ENCODE measurements at regions of chr5 and their contacts with region 1.

Region 1: GRCh38 chr5:112995764-112996618 is 19.4 kb downstream of the DCP2 start:
- DNase-seq: peak in 1 of 2 experiments; percentile 88
- H3K4me3 ChIP-seq: no peak overlapping the region
- H3K27ac ChIP-seq: no peak overlapping the region
- H3K4me1 ChIP-seq: no peaks in the 10 kb centered on the region; a peak in 1 of 7 replicates
- H3K27me3 ChIP-seq: no peaks in the 10 kb centered on the region
- CTCF ChIP-seq: peak; percentile 38 to 82 (median 72)
- EP300 ChIP-seq: no peak
- POLR2A ChIP-seq: no peak
- RAD21 ChIP-seq: peak; percentile 86 to 88

Region 2: DNA sequence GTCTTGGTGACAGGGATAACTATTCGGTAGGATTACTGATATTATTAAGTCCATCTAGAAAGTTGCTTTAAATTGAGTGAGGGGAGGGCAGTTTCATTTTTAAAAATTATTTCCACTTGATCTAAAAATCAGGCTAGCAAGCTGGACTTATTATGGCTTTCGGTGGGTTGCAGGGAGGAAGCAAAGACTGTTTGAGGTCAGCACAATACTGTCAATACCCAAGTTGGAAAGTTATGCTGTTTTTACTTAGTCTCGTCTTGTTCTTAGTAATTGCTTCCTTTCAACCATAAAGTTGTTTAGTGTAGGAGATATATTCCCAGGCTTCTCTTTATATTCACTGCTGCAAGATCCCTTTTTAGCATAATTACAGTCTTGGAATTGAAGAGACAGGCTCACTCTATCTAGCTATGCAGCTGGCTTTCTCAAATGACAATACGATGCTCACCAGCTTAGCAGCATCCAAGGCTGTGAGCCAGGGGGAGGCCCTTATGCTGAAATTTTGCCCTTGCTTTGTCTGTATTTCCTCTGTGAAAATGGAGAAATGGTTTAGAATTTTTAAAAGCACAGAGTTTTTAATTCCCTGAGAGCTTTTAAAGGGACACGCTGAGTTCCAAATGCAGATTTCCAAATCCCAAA is 326.5 kb before region 1 on chr5:
- CTCF ChIA-PET with region 1: no interaction called
- POLR2A ChIA-PET with region 1: no interaction called
- DNase-seq: no peak
- H3K4me3 ChIP-seq: no peak overlapping the region
- H3K27ac ChIP-seq: no peak overlapping the region
- H3K4me1 ChIP-seq: no peaks in the 10 kb centered on the region
- H3K27me3 ChIP-seq: no peaks in the 10 kb centered on the region
- CTCF ChIP-seq: no peak
- EP300 ChIP-seq: no peak
- POLR2A ChIP-seq: no peak
- RAD21 ChIP-seq: no peak

Region 3: DNA sequence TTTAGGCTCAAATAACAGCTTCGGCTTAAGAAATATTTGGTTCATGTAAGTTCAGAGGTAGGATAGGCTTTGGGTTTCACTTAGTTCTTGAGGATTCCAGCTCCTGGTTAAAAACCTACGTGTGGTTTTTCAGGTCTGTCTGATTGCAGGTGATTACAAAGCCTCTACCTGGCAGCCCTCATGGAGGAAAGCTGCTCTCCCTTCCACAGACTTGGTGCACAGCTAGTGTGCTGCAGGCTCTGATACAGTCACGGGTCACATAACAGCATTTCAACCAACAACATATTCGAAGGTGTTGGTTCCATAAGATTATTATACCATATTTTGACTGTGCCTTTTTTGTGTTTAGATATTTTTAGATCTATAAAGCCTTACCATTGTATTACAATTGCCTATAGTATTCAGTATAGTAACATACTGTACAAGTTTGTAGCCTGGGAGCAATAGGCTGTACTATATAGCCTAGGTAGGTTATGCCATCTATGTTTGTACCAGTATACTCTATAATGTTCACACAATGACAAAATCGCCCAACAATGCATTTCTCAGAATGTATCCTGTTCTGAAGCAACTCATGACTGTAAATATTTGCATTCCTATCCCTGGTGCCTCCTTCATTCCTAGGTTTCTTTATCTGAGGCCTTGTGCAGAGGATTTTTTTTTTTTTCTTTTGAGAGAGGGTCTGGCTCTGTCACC is 27.4 kb before region 1 on chr5:
- CTCF ChIA-PET with region 1: interaction called, 18 read pairs
- POLR2A ChIA-PET with region 1: no interaction called
- DNase-seq: no peak
- H3K4me3 ChIP-seq: no peak overlapping the region
- H3K27ac ChIP-seq: no peak overlapping the region
- H3K4me1 ChIP-seq: peaks cover 0 to 6% (median 3%) of the 10 kb centered on the region in 4 experiments; a peak in 4 of 7 replicates
- H3K27me3 ChIP-seq: no peaks in the 10 kb centered on the region
- CTCF ChIP-seq: no peak
- EP300 ChIP-seq: no peak
- POLR2A ChIP-seq: no peak
- RAD21 ChIP-seq: no peak

Region 4: DNA sequence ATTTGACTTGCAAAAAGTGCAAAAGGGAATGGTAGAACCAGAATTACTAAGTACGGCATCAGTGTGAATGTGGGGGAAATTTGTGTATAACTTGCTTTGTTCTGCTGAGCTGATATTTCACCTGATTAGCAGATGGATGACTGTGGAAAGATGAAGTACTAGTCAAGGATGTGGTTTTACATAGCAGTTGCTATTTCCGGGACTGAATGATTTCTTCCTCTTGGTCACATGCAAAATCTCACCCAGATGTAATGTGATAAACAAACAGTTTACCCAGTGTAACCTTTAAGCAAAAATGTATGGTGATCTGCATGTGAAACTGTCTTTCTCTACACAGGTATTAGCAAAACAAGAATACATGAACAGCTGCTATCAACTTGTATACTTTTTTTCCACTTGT is 26.7 kb after region 1 on chr5:
- CTCF ChIA-PET with region 1: interaction called, 16 read pairs
- POLR2A ChIA-PET with region 1: no interaction called
- DNase-seq: no peak
- H3K4me3 ChIP-seq: no peak overlapping the region
- H3K27ac ChIP-seq: no peak overlapping the region
- H3K4me1 ChIP-seq: no peaks in the 10 kb centered on the region
- H3K27me3 ChIP-seq: no peaks in the 10 kb centered on the region
- CTCF ChIP-seq: no peak
- EP300 ChIP-seq: no peak
- POLR2A ChIP-seq: peak in 1 of 2 experiments; percentile 37; a peak in 1 of 3 replicates
- RAD21 ChIP-seq: no peak

Region 5: GRCh38 chr5:113043491-113043931 is 47.5 kb after region 1 on chr5:
- CTCF ChIA-PET with region 1: interaction called, 13 read pairs
- POLR2A ChIA-PET with region 1: no interaction called
- DNase-seq: peak; percentile 41 to 79
- H3K4me3 ChIP-seq: no peak overlapping the region
- H3K27ac ChIP-seq: no peak overlapping the region
- H3K4me1 ChIP-seq: no peaks in the 10 kb centered on the region
- H3K27me3 ChIP-seq: no peaks in the 10 kb centered on the region
- CTCF ChIP-seq: peak; percentile 72 to 78 (median 78)
- EP300 ChIP-seq: no peak
- POLR2A ChIP-seq: no peak
- RAD21 ChIP-seq: peak; percentile 92 to 93

Region 6: DNA sequence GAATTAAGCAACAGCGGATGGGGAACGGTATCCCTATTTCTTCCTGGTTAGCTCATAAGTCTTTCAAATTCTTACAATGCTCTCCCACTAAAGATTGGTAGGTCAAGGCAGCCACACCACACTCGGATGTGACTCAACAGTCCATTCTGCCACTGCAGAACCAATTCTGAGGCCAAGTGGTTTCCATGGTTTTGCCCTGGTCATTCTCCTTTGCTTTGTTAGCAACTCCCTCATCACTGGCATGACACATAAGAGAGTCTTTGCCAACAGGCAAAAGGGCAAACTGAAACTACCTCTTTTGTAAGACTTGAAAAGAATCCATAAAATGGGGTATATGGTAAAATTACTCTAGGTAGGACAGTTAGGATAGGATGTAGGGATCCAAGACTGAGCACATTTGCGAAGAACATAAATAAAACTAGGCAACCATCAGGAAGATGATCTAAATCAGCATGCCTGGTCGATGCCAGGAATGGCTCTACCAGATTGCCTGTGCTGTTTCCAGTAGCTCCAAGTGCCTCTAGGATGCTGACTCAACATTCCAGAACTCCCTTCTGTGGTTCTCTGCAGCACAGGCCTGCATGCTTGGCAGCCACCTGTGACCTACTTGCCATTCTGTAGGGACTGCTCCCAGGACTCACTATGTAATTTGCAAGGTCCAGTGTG is 86.0 kb after region 1 on chr5:
- CTCF ChIA-PET with region 1: interaction called, 10 read pairs
- POLR2A ChIA-PET with region 1: no interaction called
- DNase-seq: no peak
- H3K4me3 ChIP-seq: no peak overlapping the region
- H3K27ac ChIP-seq: no peak overlapping the region
- H3K4me1 ChIP-seq: peaks cover 0 to 7% (median 0%) of the 10 kb centered on the region in 4 experiments; a peak in 1 of 7 replicates
- H3K27me3 ChIP-seq: no peaks in the 10 kb centered on the region; a peak in 1 of 7 replicates
- CTCF ChIP-seq: no peak
- EP300 ChIP-seq: no peak
- POLR2A ChIP-seq: no peak
- RAD21 ChIP-seq: no peak

Region 7: DNA sequence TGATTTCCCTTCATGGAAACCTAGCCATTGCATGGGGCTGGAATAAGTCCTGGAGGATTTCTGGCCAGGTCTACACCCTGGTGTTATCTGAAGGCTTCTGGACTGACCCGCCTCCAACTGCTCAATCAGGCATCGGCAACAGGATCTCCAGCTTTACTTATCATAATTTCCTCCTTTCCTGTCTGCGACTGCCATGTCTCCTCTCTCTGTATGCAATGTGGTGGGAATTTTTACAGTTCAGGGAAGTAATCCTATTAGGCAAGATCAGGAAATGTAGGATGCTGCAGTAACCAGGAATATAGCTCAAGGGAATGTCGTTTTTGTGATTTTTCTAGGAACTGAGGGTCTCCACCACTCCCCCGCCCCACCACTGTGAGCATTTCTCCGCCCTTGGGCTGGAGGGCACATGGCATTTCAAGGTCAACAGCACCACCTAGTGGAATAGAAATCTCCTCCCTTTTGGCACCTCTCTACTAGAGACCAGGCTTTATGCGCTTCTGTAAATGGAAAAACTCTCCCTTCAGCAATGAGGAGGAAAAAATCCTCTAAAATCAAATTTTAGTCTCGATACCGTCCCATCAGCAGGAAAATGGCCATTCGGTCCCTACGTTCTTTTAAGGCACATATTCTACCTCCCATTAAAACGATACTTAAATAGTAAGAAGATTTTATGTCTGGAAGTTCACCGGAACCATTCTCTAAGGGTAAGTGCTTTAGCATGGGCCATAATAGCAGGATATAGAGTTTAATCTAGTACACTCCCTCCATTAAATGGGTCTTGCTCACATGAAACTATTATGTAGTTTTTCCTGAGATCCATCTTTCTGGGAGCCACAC is 610.5 kb after region 1 on chr5:
- CTCF ChIA-PET with region 1: interaction called, 12 read pairs
- POLR2A ChIA-PET with region 1: no interaction called
- DNase-seq: peak; percentile 23 to 73
- H3K4me3 ChIP-seq: no peak overlapping the region
- H3K27ac ChIP-seq: no peak overlapping the region
- H3K4me1 ChIP-seq: no peaks in the 10 kb centered on the region; a peak in 2 of 7 replicates
- H3K27me3 ChIP-seq: no peaks in the 10 kb centered on the region
- CTCF ChIP-seq: peak; percentile 49 to 86 (median 86)
- EP300 ChIP-seq: no peak
- POLR2A ChIP-seq: no peak
- RAD21 ChIP-seq: peak; percentile 97

Measured in H1 (cell line).